ENCODE measurements at regions of chr19 and their contacts with region 1.

Region 1: DNA sequence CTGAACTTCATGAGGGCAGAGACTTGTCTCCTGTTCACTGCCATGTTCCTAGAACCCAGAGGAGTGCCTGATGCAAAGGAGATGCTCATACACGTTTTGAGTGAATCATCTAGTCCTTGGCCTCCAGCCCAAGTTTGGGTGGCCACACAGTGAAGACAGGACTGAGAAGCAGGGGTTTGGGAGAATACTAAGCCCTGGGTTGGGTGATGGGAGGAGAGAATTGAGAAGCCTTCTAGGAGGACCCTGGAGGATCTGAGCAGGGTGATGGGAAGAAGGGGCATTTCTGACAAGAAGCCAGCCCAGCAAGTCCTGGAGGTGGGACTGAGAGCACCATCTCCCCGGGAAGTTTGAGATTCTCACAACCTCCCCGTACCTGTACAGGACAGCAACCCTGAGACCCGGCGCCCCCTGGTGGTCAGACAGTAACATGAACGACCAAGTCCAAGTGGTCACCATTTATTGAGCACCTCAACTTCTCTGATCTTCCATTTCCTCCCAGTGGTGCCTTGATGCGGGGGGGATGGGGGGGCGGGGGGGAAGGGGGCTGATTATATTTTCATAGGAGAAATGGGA is 11.0 kb downstream of the CTU1 start:
- DNase-seq: peak; percentile 93
- H3K4me3 Mint-ChIP-seq: no peak overlapping the region
- H3K27ac Mint-ChIP-seq: no peak overlapping the region
- H3K4me1 Mint-ChIP-seq: peaks cover 33% of the 10 kb centered on the region
- H3K27me3 Mint-ChIP-seq: no peaks in the 10 kb centered on the region
- CTCF ChIP-seq: peak; percentile 75

Region 2: DNA sequence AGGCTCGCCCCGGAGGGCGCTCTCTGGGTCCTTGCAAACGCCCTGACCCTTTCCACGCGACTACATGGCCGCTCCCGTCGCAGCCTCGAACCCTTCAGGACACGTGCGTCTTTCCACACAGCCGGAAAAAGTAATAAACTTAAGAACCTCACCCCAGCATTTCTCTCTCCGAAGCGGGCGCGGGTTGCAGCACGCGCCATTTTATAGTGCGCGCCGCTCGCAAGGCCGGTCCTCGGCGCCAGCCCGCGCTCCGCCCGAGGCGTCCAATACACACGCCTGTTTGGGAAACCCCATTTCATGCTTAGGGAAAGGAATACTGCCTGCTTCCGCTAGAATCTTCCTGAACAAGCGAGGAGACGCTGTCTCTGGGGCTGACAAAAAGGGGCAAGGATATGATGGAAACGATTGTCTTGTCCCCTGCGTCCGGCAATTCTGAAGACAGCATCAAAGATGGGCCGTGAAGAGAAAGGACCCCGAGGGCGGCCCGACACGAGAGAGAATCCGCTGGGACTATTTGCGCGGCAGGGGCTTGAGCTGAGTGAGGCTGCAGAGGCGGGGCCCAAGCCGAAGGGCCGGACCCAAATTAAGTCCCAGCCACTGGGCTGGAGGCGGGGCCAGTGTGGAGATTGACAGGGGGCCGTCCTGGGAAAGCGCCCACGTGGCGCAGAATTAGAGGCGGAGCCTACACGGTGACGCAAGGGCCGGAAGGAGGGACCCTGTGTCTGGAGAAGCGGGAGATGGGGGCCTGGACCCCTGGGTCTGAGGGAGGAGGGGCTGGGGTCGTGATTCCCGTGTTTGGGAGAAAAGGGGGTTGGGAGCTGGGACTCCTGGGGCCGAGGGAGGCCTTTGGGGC is 292.6 kb before region 1 on chr19:
- CTCF ChIA-PET with region 1: no interaction called
- intact Hi-C with region 1: loop called (anchors 5 kb)
- DNase-seq: peak; percentile 99
- H3K4me3 Mint-ChIP-seq: peak overlapping the region; percentile 85
- H3K27ac Mint-ChIP-seq: peak overlapping the region; percentile 98
- H3K4me1 Mint-ChIP-seq: peaks cover 37% of the 10 kb centered on the region
- H3K27me3 Mint-ChIP-seq: peaks cover 24% of the 10 kb centered on the region
- CTCF ChIP-seq: no peak

Region 3: DNA sequence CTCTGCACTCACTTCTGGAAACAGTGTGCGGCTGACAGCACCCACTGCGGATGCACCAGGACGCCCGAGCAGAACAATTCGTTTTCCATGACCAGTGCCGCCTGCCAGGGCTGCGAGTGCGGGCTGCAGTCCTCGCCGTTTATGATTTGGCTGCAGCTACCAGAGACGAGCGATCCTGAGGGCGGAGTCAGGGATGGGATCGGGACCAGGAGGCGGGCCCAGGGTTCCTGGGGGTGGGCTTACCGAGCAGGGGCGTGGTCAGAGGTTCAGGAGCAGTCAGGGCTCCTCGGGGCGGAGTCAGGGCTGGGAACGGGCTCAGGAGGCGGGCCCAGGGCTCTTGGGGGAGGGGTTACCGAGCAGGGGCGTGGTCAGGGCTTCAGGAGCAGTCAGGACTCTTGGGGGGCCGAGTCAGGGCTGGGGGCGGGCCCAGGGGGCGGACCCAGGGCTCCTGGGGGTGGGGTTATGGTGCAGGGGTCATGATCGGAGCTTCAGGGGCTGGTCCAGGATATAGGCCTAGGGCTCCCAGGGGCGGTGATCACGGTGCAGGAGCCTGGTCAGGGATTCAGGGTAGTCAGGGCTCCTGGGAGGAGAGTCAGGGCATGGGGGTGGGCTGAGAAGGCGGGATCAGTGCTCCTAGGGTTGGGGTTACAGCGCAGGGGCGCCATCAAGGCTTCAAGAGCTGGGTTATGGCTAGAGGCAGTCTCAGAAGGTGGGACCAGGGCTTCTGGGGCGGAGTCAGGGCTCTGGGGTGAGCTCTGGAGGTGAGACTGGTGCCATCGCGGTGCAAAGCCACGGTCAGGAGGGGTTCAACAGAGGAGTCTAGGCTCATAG is 187.8 kb before region 1 on chr19:
- CTCF ChIA-PET with region 1: interaction called, 5 read pairs
- intact Hi-C with region 1: loop called (anchors 5 kb)
- DNase-seq: peak; percentile 80
- H3K4me3 Mint-ChIP-seq: no peak overlapping the region
- H3K27ac Mint-ChIP-seq: no peak overlapping the region
- H3K4me1 Mint-ChIP-seq: no peaks in the 10 kb centered on the region
- H3K27me3 Mint-ChIP-seq: no peaks in the 10 kb centered on the region
- CTCF ChIP-seq: no peak

Region 4: DNA sequence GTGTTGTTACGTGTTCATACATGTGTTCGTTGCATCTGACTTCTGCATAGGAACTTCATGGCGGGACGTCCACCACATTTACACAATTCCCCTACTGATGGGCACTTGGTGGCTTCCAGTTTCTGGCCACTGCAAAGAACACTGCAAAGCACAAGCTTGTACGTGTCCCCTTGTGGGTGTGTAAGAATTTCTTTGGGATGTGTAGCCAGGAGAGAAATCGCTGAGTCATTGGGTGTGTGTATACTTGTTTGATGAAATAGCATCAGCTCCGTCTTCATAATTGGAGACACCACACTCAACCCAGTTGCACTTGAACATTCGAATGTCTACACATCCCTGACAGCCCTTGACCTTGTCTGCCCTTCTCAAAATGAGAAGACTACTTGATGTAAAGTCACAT is 163.6 kb before region 1 on chr19:
- CTCF ChIA-PET with region 1: no interaction called
- intact Hi-C with region 1: loop called (anchors 2 kb)
- DNase-seq: no peak
- H3K4me3 Mint-ChIP-seq: no peak overlapping the region
- H3K27ac Mint-ChIP-seq: peak overlapping the region; percentile 59
- H3K4me1 Mint-ChIP-seq: peaks cover 43% of the 10 kb centered on the region
- H3K27me3 Mint-ChIP-seq: no peaks in the 10 kb centered on the region
- CTCF ChIP-seq: no peak

Region 5: DNA sequence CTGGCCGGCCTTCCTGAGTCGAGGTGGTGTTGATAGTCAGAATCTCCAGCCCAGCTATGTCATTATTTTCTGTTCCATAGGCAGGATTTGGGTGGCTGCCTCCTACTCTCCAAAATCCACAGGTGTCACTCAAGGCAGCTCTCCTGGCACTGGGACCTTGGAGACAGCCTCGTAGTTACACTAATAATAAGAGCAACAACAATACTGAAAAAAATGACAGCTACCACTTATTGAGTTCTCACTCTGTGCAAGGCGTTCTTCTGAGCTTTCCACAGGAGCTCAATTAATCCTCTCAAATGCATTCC is 50.3 kb before region 1 on chr19:
- CTCF ChIA-PET with region 1: no interaction called
- intact Hi-C with region 1: no loop called
- DNase-seq: no peak
- H3K4me3 Mint-ChIP-seq: no peak overlapping the region
- H3K27ac Mint-ChIP-seq: no peak overlapping the region
- H3K4me1 Mint-ChIP-seq: no peaks in the 10 kb centered on the region
- H3K27me3 Mint-ChIP-seq: peaks cover 16% of the 10 kb centered on the region
- CTCF ChIP-seq: no peak

Measured in Calu3 (cell line).